Aorta (tissue), 5 donors: ENCODE measurements at regions of chr6 and their contacts with region 1.

Region 1: DNA sequence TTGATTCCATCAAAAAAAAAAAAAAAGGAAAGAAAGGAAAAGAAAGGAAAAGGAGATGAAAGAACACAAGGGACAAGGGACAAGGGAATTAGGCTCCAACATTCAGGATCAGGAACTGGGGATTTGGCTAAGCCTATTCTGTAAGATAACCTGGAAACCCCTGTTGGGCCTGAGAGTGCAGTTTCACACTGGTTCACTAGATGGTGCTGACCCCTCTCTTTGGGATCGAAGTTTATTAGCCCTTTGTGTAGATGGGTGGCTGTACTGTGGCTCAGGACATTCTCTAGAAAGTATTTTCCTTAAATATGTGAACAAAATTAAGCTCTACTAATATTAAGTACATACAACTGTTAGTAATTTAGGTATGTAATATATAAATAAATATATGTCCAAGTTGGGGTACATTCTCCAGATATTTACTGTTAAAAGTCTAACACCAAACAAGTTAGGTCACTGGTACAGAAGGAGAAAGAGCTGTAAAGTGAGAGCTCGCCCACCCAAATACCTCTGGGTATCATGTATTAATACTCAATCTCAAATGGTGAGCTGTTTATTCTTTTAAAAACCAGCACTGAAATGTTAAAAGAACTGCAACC is 6.3 kb downstream of the OR2A4 start:
- DNase-seq: no peak
- ATAC-seq: peak; percentile 83
- H3K4me3 ChIP-seq: no peak overlapping the region
- H3K27ac ChIP-seq: no peak overlapping the region
- H3K4me1 ChIP-seq: no peaks in the 10 kb centered on the region
- H3K27me3 ChIP-seq: no peaks in the 10 kb centered on the region

Region 2: GRCh38 chr6:131213501-131213990 is 481.4 kb before region 1 on chr6:
- intact Hi-C with region 1: no loop called
- DNase-seq: no peak
- ATAC-seq: no peak
- H3K4me3 ChIP-seq: no peak overlapping the region
- H3K27ac ChIP-seq: no peak overlapping the region
- H3K4me1 ChIP-seq: no peaks in the 10 kb centered on the region
- H3K27me3 ChIP-seq: no peaks in the 10 kb centered on the region

Region 3: GRCh38 chr6:131787766-131788712 is 93.1 kb after region 1 on chr6:
- intact Hi-C with region 1: loop called (anchors 5 to 10 kb)
- DNase-seq: no peak
- ATAC-seq: peak; percentile 48
- H3K4me3 ChIP-seq: no peak overlapping the region
- H3K27ac ChIP-seq: no peak overlapping the region
- H3K4me1 ChIP-seq: no peaks in the 10 kb centered on the region
- H3K27me3 ChIP-seq: no peaks in the 10 kb centered on the region

Region 4: GRCh38 chr6:131807644-131808459 is 112.9 kb after region 1 on chr6 and contains the start of gene ENPP1:
- intact Hi-C with region 1: loop called in 1 of 2 experiments (anchors 5 kb)
- DNase-seq: peak; percentile 89 to 93
- ATAC-seq: peak; percentile 92
- H3K4me3 ChIP-seq: peak within 1 kb of the TSS; percentile 79 to 99
- H3K27ac ChIP-seq: peak within 1 kb of the TSS; percentile 81 to 93
- H3K4me1 ChIP-seq: peaks cover 3 to 20% of the 10 kb centered on the region in 2 donors
- H3K27me3 ChIP-seq: no peaks in the 10 kb centered on the region
- total RNA-seq, gene ENPP1: 20.2 to 35.2 TPM

Region 5: DNA sequence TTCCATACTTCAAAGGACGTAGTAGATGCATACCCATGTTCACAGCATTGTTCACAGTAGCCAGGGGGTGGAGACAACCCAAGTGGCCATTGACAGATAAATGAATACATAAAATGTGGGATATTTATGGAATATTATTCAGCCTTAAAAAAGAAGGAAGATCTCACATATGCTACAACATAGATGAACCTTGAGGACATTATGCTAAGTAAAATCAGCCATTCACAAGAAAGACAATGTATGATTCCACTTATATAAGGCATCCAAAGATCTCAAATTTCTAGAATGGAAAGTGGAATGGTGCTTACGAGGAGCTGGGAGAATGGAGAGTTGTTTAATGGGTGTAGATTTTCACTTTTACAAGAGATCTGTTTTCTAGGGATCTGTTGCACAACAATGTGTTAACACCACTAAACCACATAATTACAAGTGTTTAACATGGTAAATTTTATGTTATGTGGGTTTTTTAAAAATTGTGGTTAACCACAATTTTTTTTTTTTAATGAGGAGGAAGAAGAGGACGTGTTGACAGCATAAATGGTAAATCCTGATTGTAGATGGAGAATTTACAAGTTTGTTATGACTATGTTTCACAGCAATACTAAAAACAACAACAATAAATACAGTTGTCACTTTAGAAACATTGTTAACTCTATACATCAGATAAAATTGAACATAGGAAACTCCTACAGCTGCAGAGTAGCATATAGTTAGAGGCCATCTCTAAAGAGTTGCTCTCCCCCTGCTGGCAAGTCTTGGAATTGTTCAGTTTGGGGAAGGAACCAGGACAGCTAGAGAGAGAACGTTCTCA is 214.7 kb after region 1 on chr6:
- intact Hi-C with region 1: loop called in 1 of 2 experiments (anchors 5 kb)
- DNase-seq: peak; percentile 71 to 77
- ATAC-seq: peak; percentile 79
- H3K4me3 ChIP-seq: no peak overlapping the region
- H3K27ac ChIP-seq: no peak overlapping the region
- H3K4me1 ChIP-seq: no peaks in the 10 kb centered on the region
- H3K27me3 ChIP-seq: no peaks in the 10 kb centered on the region

Region 6: DNA sequence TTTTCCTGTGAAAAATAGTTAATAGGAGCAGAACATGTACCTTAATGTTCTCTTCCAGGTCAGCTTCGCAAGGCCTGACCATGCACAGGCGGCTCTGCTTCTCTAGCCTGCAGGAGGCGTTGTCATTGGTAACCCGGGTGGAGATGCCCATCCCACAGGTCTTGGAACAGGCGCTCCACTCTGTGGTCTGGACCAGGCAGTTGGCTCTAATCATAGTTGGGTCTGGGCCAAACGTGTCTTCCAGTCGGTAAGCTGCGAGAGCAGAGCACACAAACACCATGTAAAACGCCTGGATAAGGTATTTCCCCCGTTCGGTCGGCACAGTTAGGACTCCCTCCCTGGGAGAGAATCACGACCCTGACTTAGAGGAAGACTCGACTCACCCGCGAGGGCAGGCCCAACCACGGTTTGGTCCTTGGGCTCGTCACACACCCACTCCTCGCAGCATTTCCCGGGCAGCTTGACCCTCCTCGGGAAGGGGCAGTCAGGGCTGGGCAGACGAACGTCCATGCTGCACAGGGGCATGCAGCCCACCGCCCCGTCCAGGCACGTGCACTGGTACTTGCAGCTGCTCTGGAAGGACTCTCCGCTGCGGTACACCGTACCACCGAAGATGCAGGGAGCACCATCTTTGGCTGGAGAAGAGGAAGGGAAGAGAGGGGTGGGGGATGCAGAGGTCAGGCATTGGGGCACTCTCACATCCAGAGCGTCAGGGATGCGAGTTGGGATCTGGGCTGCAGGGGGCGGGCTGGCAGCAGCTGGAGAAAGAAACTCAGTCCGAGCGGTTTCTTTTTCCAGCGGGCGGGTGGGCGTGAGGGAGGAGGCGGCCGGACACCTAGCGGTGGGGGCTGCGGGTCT is 255.2 kb after region 1 on chr6:
- intact Hi-C with region 1: no loop called
- DNase-seq: peak; percentile 83 to 88
- ATAC-seq: peak; percentile 84
- H3K4me3 ChIP-seq: peak overlapping the region; percentile 41 to 72
- H3K27ac ChIP-seq: peak overlapping the region; percentile 56 to 98
- H3K4me1 ChIP-seq: peaks cover 2 to 7% of the 10 kb centered on the region in 2 donors
- H3K27me3 ChIP-seq: no peaks in the 10 kb centered on the region